Head of caudate nucleus (tissue), 42 donors: ENCODE measurements at regions of chr14 and their contacts with region 1.

Region 1: DNA sequence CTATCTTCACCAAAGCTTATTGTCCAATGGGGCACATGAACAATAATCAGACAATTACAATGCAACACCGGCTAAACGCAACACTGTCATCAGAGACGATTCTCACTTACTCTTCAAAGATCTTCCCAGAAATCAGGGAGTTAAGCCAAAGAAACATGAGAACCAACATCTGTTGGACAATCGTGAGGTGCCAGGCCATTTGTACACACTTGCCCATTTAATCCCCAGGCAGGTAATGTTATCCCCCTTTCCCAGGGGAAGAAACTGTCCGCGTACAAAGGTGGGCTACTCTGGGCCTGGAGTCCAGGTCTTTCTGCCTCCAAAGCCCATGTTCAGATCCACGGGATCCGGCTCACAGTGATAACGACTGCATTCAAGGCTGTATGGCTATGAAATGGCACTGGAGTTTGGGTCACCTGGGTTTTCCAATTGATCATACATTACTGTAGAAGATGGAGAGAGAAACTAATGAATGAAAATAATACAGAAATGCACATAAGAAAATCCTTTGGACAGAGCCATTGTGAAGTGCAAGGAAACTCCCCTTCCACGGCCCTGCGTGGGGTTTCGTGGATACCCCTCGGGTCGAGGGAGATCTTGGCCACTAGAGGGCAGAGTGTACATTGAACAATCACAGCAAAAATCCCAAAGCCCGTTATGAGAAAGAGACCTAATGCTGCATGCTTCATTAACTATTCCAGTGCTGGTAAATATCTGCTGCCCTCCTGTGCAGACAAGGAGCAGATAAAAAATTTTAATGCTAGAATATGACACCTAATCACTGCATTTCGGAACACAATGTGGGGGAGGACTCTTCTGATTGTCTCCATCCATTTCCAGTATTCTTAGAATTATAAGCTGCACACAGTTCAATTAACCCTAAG is 111.4 kb downstream of the EGLN3 start:
- DNase-seq: peak; percentile 28 to 91 (median 74)

Region 2: DNA sequence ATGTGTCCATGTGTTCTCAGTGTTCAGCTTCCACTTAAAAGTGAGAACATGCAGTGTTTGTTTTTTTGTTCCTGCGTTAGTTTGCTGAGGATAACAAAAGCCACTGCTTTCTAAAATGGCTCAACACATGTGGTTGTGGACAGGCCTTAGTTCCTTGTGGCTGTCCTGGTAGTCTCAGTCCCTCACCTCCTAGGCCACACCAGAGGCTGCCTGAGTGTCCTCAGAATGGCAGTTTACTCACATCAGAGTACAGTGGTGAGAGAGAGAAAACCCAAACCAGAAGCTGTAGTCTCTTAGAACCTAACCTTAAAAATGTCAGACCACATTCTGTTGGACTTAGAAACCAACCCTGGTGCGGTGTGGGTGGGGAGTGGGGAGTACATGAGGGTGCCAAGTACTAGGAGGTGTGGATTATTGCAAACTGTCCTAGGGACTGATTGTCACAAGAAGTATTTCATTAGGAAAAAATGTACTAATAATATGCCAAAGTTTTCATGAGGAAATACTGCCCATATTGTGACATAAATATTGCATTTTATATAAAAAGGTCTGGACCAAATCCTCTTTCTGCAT is 870.4 kb before region 1 on chr14:
- intact Hi-C with region 1: no loop called
- DNase-seq: no peak

Region 3: DNA sequence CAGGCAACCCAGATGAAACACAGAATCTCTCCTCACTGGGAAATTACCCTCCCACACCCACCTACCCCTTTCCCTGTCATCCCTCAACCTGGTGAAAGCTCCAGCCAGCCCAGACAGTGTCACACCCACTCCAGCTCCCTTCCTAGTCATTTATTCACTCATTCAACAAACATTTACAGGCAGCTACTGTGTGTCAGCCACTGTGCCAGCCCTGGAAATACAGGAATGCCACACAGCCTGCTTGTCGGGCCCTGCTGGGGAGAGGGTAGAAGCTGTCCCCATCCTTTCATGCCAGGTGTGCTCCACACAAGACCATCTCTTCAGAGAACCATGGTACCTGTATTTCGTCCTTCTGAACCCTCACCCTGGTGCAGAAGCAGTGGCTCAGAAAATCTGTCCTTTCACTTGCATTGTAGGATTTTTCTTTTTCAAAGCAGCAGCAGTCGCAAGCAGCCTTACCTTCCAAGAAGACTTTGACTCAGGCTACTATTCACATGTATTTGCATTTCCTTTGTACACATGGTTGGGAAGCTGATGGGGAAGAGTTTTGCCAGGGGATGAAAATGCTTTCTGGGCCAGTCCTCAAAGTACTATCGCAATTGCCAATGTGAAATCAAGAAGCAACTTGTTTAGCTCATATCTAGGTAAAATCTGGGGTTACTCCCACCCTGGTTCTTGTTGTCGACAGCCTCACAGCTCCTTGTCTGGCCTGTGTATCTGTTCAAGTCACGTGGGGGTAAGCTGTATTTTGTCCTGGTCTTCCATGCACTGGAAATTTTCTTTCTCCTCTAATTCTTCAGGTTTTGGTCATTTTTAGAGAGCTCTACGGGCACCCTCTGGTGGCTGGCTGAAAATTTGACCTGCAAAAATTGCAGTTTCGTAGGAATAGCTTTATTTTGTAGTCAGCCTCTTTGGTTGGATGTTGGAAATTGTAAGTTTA is 258.9 kb after region 1 on chr14:
- intact Hi-C with region 1: loop called (anchors 5 kb)
- DNase-seq: peak; percentile 13 to 82 (median 62)

Region 4: GRCh38 chr14:34227834-34228649 is 388.6 kb after region 1 on chr14:
- intact Hi-C with region 1: loop called (anchors 10 kb)
- DNase-seq: peak; percentile 49 to 88 (median 74)